MCF 10A (cell line): ENCODE measurements at regions of chr4 and their contacts with region 1.

Region 1: DNA sequence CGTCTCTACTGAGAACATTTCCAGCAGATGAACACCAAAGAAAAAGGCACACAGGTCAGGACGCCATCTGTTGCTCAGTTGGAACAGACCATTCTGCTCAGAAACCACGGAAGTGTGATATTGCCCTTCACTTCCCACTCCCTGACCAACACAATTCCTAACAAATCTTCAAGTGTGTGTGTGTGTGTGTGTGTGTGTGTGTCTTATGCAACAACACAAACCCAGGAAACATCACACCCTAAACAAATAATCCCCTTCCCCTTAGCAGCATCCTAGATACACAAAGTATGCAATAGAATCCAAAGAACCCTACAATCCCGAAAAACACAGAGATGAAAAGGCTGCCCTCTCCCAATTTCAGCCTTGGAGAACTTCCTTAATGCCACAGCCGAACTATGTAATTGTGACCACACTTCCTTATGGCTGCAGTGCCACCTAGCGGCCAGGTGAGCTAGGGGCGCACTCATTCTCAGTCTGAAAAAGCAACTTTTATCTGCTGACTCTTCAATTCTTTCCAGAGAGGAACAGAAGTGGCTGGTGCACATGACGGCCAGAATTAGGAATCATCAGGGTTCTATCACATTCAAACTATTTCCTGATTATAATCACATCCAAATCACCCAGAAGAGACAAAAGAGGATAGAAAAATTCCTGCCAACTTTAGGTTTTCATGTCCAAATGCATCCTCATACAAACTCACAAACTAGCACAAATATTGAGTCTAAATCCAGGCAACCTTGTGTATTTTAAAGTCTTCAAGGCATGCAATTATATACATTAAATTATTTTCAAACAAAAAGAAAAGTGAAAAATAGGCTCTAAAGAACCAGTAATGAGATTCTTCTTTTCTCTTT is 164.9 kb downstream of the DHX15 start:
- DNase-seq: peak; percentile 85
- H3K4me3 Mint-ChIP-seq: no peak overlapping the region
- H3K27ac Mint-ChIP-seq: peak overlapping the region; percentile 36
- H3K4me1 Mint-ChIP-seq: peaks cover 16% of the 10 kb centered on the region
- H3K27me3 Mint-ChIP-seq: no peaks in the 10 kb centered on the region
- CTCF ChIP-seq: peak; percentile 90

Region 2: GRCh38 chr4:23135792-23136645 is 1283.4 kb before region 1 on chr4:
- CTCF ChIA-PET with region 1: interaction called, 4 read pairs
- POLR2A ChIA-PET with region 1: no interaction called
- intact Hi-C with region 1: loop called (anchors 1 kb)
- DNase-seq: peak; percentile 64
- H3K4me3 Mint-ChIP-seq: no peak overlapping the region
- H3K27ac Mint-ChIP-seq: no peak overlapping the region
- H3K4me1 Mint-ChIP-seq: no peaks in the 10 kb centered on the region
- H3K27me3 Mint-ChIP-seq: no peaks in the 10 kb centered on the region
- CTCF ChIP-seq: peak; percentile 85

Region 3: DNA sequence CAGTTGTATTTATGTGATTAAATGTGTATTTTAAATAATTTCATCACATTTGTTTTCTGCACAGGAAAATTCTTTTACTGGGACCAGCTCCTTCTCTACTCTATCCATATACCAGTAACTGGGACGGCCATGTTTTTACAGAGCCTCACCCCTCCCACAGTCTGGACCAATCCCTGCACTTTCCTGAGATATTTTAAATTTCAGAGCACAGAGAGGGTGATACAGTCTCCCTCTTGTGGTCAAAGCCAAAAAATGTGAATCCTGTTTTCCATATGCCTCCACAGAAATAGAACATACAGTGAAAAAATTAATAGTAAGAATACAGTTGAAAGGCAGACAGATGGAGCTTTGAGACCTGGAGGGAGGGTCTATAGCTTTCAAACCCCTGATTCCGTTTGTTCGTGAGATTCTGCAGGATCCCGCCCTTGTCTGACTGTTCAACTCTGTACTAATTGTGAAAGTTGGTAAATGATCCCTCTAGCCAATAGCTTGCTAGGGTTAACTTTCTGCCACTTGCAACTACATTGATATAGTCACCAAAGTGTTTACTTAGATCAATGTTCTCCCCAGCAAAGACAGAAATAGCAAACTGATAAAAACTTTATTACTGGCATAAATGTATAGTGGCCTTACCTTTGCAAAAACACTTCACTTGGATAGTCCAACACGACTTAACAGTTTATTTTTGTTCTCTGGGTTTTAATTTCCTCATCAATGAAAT is 701.7 kb before region 1 on chr4:
- CTCF ChIA-PET with region 1: interaction called, 3 read pairs
- POLR2A ChIA-PET with region 1: no interaction called
- intact Hi-C with region 1: loop called (anchors 1 kb)
- DNase-seq: peak; percentile 34
- H3K4me3 Mint-ChIP-seq: no peak overlapping the region
- H3K27ac Mint-ChIP-seq: no peak overlapping the region
- H3K4me1 Mint-ChIP-seq: no peaks in the 10 kb centered on the region
- H3K27me3 Mint-ChIP-seq: no peaks in the 10 kb centered on the region
- CTCF ChIP-seq: peak; percentile 23

Region 4: GRCh38 chr4:24032371-24032989 is 386.9 kb before region 1 on chr4:
- CTCF ChIA-PET with region 1: no interaction called
- POLR2A ChIA-PET with region 1: no interaction called
- intact Hi-C with region 1: loop called (anchors 1 kb)
- DNase-seq: peak; percentile 31
- H3K4me3 Mint-ChIP-seq: no peak overlapping the region
- H3K27ac Mint-ChIP-seq: no peak overlapping the region
- H3K4me1 Mint-ChIP-seq: no peaks in the 10 kb centered on the region
- H3K27me3 Mint-ChIP-seq: no peaks in the 10 kb centered on the region
- CTCF ChIP-seq: no peak

Region 5: DNA sequence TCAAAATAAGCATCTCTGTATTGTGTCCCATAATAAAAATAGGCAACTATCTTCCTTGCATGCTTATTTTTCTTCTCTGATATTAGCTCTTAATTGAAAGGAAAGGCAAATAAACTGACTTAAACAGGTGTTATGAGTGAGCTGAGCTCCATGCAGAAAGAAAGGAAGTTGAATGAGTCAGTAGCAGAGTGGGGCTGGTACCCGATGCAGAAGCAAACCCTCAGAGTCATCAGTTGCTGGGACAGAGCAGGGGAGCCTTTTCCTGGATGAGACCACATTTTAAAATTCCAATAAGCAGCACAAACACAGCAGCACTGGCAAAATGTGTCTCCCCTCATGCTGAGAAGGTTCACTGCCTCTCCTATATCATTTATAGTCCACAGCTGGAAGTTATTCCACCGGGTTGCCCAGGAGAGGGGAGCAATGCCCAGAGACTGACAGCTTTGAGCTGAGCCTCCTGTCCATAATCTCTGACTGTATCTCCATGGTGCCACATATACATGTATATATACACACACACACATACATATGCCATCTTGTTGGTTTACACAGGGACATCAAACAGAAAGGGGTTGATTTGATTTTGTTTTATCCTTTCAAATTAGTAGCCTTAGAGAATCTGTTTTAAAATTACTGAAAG is 255.2 kb before region 1 on chr4:
- CTCF ChIA-PET with region 1: no interaction called
- POLR2A ChIA-PET with region 1: no interaction called
- intact Hi-C with region 1: loop called (anchors 5 kb)
- DNase-seq: no peak
- H3K4me3 Mint-ChIP-seq: no peak overlapping the region
- H3K27ac Mint-ChIP-seq: no peak overlapping the region
- H3K4me1 Mint-ChIP-seq: peaks cover 21% of the 10 kb centered on the region
- H3K27me3 Mint-ChIP-seq: no peaks in the 10 kb centered on the region
- CTCF ChIP-seq: no peak

Region 6: GRCh38 chr4:24190936-24191695 is 228.3 kb before region 1 on chr4:
- CTCF ChIA-PET with region 1: no interaction called
- POLR2A ChIA-PET with region 1: no interaction called
- intact Hi-C with region 1: no loop called
- DNase-seq: no peak
- H3K4me3 Mint-ChIP-seq: no peak overlapping the region
- H3K27ac Mint-ChIP-seq: no peak overlapping the region
- H3K4me1 Mint-ChIP-seq: peaks cover 6% of the 10 kb centered on the region
- H3K27me3 Mint-ChIP-seq: no peaks in the 10 kb centered on the region
- CTCF ChIP-seq: no peak

Region 7: GRCh38 chr4:24236532-24236931 is 182.9 kb before region 1 on chr4:
- CTCF ChIA-PET with region 1: no interaction called
- POLR2A ChIA-PET with region 1: no interaction called
- intact Hi-C with region 1: no loop called
- DNase-seq: peak; percentile 54
- H3K4me3 Mint-ChIP-seq: no peak overlapping the region
- H3K27ac Mint-ChIP-seq: peak overlapping the region; percentile 32
- H3K4me1 Mint-ChIP-seq: peaks cover 16% of the 10 kb centered on the region
- H3K27me3 Mint-ChIP-seq: no peaks in the 10 kb centered on the region
- CTCF ChIP-seq: no peak